ENCODE measurements at regions of chr11 and their contacts with region 1.

Region 1: GRCh38 chr11:112537846-112538330 is 277.2 kb upstream of the PLET1 start:
- DNase-seq: no peak
- ATAC-seq: no peak
- H3K4me3 ChIP-seq: no peak overlapping the region
- H3K27ac ChIP-seq: no peak overlapping the region
- H3K4me1 ChIP-seq: peaks cover 12% of the 10 kb centered on the region
- H3K27me3 ChIP-seq: no peaks in the 10 kb centered on the region
- CTCF ChIP-seq: no peak

Region 2: DNA sequence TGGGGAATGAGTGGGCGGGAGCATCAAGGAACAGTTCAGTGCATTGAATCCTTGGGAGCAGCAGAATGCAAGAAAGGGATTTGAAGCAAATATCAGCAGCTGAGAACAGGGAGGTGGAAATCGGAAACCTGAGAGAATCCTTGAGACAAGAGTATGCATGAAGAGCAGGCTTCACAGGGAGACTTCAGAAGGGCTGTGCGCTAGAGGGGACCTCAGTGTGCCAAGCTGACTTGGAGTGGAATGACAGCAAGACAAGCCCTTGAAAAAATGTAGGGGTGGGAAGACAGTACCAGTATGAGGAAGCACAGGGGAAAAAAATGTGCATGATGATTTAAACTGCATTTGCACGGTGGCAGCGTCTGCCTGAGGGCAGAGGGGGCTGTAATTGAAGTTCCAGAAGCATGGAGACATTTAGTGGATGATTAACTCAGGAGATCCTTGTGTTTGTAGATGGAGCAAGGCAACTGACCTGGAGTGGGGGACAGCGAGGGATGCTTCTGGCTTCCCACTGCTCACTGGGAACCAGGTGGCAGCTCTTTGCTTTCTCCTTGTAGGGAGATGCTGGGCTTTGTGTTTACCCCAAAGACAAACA is 72.4 kb before region 1 on chr11:
- intact Hi-C with region 1: loop called in 1 of 2 experiments (anchors 5 kb)
- DNase-seq: no peak
- ATAC-seq: no peak
- H3K4me3 ChIP-seq: no peak overlapping the region
- H3K27ac ChIP-seq: no peak overlapping the region
- H3K4me1 ChIP-seq: peaks cover 5% of the 10 kb centered on the region
- H3K27me3 ChIP-seq: peaks cover 0 to 2% (median 0%) of the 10 kb centered on the region in 3 donors
- CTCF ChIP-seq: no peak